T-cell (primary cell): ENCODE measurements at regions of chr5 and their contacts with region 1.

Region 1: GRCh38 chr5:172984243-172984953 is 827 bp downstream of the ATP6V0E1 start:
- DNase-seq: peak; percentile 36 to 90 (median 81)
- ATAC-seq: peak; percentile 74 to 81 (median 77)
- H3K4me3 ChIP-seq: peak overlapping the region; percentile 80 to 88
- H3K4me3 Mint-ChIP-seq: peak overlapping the region; percentile 93 to 97 (median 96)
- H3K27ac ChIP-seq: peak overlapping the region; percentile 88
- H3K27ac Mint-ChIP-seq: peak overlapping the region; percentile 97 to 98
- H3K4me1 ChIP-seq: peaks cover 6 to 21% of the 10 kb centered on the region in 2 experiments
- H3K4me1 Mint-ChIP-seq: peaks cover 33 to 57% (median 55%) of the 10 kb centered on the region in 3 donors
- H3K27me3 ChIP-seq: no peaks in the 10 kb centered on the region
- H3K27me3 Mint-ChIP-seq: no peaks in the 10 kb centered on the region

Region 2: GRCh38 chr5:172943283-172943841 is 41.0 kb before region 1 on chr5:
- CTCF ChIA-PET with region 1: no interaction called
- POLR2A ChIA-PET with region 1: no interaction called
- DNase-seq: no peak
- ATAC-seq: no peak
- H3K4me3 ChIP-seq: no peak overlapping the region
- H3K4me3 Mint-ChIP-seq: no peak overlapping the region
- H3K27ac ChIP-seq: no peak overlapping the region
- H3K27ac Mint-ChIP-seq: no peak overlapping the region
- H3K4me1 ChIP-seq: no peaks in the 10 kb centered on the region
- H3K4me1 Mint-ChIP-seq: no peaks in the 10 kb centered on the region
- H3K27me3 ChIP-seq: no peaks in the 10 kb centered on the region
- H3K27me3 Mint-ChIP-seq: no peaks in the 10 kb centered on the region

Region 3: DNA sequence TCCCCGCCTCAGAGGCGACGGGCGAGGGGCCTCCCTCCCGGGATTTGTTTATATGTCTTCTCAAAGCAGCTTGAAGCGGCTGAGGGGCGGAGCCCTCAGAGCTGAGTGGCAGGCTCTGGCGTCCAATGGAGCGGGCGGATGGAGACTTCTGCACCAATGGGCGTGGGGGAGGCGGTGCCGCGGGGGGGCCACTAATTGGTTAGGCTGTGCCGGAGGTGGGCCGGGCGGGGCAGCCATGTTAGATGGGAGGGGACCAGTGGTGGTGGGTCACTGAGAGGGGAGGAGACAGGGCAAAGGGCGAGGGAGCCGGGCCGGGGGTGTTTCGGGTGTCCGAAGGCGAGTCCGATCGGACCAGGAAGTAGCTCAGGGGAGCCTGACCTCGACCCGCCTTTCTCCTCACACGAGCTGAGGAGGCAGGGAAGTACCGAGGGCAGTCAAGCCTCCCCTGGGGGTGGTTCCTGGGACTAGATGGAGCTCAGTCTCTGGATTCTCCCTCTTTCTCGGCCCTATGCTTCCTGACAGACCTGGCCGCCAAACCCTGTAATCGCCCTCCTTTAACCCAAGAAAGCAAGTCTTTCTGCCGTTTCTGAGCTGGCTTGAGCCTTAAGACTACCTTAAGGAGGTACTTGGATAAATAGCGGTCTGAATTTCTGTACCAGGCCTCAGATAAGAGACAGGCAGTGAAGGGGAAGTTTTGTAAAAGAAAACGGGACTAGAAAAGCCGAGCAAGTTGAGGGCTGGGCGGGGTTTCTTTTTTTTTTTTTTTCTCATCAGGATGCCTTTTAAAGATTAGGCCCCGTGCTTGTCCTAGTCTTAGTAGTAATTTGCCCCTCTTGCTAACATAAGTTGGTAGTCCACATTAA is 72.9 kb after region 1 on chr5:
- CTCF ChIA-PET with region 1: interaction called, 4 to 25 read pairs
- POLR2A ChIA-PET with region 1: interaction called, 4 to 21 read pairs
- DNase-seq: peak; percentile 94 to 100 (median 98)
- ATAC-seq: peak; percentile 77 to 82 (median 80)
- H3K4me3 ChIP-seq: peak overlapping the region; percentile 73 to 92
- H3K4me3 Mint-ChIP-seq: peak overlapping the region; percentile 79 to 92 (median 90)
- H3K27ac ChIP-seq: peak overlapping the region; percentile 75
- H3K27ac Mint-ChIP-seq: peak overlapping the region; percentile 86 to 90
- H3K4me1 ChIP-seq: peaks cover 23 to 29% of the 10 kb centered on the region in 2 experiments
- H3K4me1 Mint-ChIP-seq: peaks cover 46 to 64% (median 53%) of the 10 kb centered on the region in 3 donors
- H3K27me3 ChIP-seq: no peaks in the 10 kb centered on the region
- H3K27me3 Mint-ChIP-seq: no peaks in the 10 kb centered on the region

Region 4: GRCh38 chr5:173144200-173145176 is 160.1 kb after region 1 on chr5 and contains the start of gene BNIP1:
- CTCF ChIA-PET with region 1: interaction called in 1 of 2 experiments, 18 read pairs
- POLR2A ChIA-PET with region 1: interaction called, 8 to 10 read pairs
- DNase-seq: peak; percentile 89 to 98 (median 95)
- ATAC-seq: peak; percentile 91 to 93 (median 93)
- H3K4me3 ChIP-seq: peak within 1 kb of the TSS; percentile 98 to 99
- H3K4me3 Mint-ChIP-seq: peak within 1 kb of the TSS; percentile 95 to 99 (median 98)
- H3K27ac ChIP-seq: peak within 1 kb of the TSS; percentile 98
- H3K27ac Mint-ChIP-seq: peak within 1 kb of the TSS; percentile 94 to 99
- H3K4me1 ChIP-seq: peaks cover 2 to 7% of the 10 kb centered on the region in 2 experiments
- H3K4me1 Mint-ChIP-seq: peaks cover 12 to 14% (median 13%) of the 10 kb centered on the region in 3 donors
- H3K27me3 ChIP-seq: no peaks in the 10 kb centered on the region
- H3K27me3 Mint-ChIP-seq: no peaks in the 10 kb centered on the region
- total RNA-seq, gene BNIP1: 7.0 to 27.1 (median 9.4) TPM